ENCODE measurements at regions of chr11 and their contacts with region 1.

Region 1: DNA sequence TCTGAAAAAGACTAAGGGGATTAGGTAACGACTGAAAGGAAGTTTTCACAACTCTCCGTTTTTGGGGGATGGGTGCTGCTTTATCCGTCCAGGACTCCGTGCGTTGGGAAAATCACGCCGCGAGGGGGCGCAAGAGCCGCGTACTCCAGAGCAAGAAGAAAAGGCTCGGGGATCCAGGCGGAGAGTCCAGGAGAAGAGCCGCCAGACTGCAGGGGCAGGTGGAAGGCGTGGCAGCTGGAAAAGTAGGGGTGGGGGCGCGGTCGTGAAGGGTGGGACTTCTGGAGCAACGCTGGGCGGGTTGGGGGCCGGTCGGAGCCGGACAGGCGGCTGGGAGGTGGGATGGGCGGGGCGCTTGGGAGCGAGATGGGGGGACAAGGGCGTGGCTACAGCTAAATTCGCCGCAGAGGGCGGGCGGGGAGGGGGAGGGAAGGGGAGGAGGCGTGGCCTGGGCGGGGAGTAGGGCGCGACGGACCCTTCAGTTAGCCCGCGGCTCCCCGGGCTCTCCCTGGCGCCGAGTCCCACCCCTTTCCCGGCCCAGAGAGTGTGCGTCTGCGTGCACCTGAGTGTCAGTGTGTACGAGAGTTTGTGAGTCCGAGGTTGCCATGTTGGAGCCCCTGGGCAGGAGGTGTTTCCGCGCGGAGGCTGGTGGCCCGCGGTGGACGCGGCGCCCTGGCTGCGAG is 613 bp upstream of the ARHGEF17 start:
- DNase-seq: peak; percentile 95
- H3K4me3 Mint-ChIP-seq: peak overlapping the region; percentile 76
- H3K27ac Mint-ChIP-seq: no peak overlapping the region
- H3K4me1 Mint-ChIP-seq: peaks cover 6% of the 10 kb centered on the region
- H3K27me3 Mint-ChIP-seq: peaks cover 15% of the 10 kb centered on the region

Region 2: GRCh38 chr11:73239571-73240194 is 67.8 kb before region 1 on chr11:
- CTCF ChIA-PET with region 1: no interaction called
- intact Hi-C with region 1: no loop called
- DNase-seq: no peak
- H3K4me3 Mint-ChIP-seq: no peak overlapping the region
- H3K27ac Mint-ChIP-seq: no peak overlapping the region
- H3K4me1 Mint-ChIP-seq: no peaks in the 10 kb centered on the region
- H3K27me3 Mint-ChIP-seq: no peaks in the 10 kb centered on the region

Region 3: DNA sequence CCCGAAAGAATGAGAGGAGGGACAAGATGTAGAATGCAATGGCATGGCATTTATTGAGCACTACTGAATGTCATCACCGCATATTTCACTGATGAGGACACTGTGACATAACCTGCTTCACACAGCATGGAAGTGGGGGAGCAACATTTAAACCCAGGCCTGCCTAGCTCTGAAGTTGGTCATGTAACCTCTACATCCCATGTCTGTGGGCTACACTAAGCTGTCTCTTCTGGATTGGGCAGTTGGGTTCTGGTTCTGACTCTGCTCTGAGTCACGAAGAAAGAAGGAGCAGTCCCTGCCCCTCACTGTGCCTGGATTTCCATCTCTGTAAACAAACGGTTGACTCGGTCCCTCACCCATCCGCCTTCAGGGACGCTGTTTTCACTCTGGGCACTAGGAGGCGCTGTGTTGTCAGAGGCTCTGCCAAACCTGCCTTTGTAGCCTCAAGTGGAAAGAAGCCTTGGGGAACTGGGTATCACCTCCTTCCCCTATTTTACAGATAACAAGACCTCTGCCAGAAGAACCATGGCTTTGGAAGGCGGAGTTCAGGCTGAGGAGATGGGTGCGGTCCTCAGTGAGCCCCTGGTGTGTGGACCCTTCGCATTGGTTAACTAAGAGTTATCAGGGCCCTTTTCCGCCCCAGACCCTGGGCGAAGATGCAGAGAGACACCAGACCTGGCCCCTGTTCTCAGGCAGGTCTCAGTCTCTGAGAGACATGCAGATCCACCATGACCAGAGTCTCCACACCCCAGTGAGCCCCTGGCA is 12.1 kb before region 1 on chr11:
- CTCF ChIA-PET with region 1: interaction called, 22 read pairs
- intact Hi-C with region 1: no loop called
- DNase-seq: peak; percentile 90
- H3K4me3 Mint-ChIP-seq: no peak overlapping the region
- H3K27ac Mint-ChIP-seq: no peak overlapping the region
- H3K4me1 Mint-ChIP-seq: peaks cover 3% of the 10 kb centered on the region
- H3K27me3 Mint-ChIP-seq: peaks cover 4% of the 10 kb centered on the region

Region 4: DNA sequence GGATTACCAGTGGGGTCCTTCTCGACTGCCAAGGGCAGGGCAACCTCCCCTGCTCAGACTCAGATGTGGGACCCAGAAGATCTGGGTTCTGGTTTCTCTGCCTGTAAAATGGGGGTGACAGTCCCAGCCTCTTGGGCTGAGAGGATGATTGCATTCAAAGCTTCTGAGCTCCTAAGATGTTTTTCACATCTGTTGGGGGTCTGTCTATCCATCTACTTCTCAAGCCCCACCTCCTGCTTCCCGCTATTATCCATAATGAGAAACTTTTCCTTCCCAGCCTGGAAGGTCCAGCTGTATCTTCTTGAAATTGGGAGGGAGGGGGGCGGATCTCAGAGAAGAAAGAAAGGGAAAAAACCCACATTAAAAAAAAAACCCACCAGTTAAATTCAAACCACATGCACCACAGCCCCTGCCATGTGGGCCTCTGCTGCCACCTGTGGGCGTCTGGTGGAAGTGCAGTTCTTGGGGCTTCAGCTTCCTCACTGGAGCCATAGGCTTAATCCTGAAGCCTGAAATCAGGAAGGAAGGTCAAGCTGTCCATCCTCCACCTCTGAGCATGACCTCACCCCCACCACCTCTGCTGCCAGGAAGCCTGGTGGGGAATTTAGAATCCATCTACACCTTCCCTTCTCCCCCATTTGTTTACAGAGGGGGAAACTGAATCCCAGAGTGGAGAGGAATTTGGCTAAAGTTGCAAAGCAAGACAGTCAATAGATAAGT is 27.9 kb after region 1 on chr11:
- CTCF ChIA-PET with region 1: interaction called, 73 read pairs
- intact Hi-C with region 1: loop called (anchors 1 kb)
- DNase-seq: peak; percentile 87
- H3K4me3 Mint-ChIP-seq: no peak overlapping the region
- H3K27ac Mint-ChIP-seq: no peak overlapping the region
- H3K4me1 Mint-ChIP-seq: no peaks in the 10 kb centered on the region
- H3K27me3 Mint-ChIP-seq: no peaks in the 10 kb centered on the region

Region 5: DNA sequence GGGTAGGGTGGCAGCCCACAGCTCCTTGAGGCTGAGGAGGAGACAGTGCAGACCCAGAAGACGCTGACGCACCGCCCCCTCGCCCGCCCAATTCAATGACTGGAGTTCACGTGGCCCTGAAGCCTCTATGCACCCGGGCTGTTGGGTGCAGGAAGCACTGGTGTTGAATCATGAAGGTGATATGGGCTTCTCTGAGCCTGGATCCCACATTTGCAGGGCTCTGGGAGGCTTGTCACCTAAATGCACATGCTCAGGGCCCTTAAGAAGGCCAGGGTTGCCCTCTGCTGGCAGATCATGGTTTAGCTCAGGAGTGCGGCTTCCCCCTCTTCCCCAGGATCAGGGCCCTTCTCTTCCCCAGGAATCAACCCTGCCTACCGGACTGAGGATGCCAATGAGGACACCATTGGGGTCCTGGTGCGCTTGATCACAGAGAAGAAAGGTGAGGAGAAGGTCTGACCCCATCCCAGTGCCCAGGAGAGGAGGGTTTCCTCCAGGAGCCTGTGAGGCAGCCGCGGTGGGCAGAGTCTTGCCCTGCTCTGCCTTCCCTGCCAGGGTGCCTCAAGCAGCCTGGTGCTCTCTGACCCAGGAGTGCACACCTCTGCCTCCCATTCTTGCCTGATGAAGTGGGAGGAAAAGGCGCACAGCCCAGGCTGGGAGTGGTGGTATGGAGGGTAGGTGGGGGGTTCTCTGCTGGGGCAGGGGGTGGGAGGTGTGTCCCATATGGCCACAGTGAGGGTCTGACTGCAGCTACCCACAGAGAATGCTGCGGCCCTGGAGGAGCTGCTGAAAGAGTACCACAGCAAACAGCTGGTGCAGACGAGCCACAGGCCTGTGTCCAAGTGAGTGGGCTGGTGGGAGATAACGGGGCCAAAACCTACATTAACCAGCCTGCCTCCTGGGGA is 86.3 kb after region 1 on chr11:
- CTCF ChIA-PET with region 1: no interaction called
- intact Hi-C with region 1: loop called (anchors 2 kb)
- DNase-seq: peak; percentile 82
- H3K4me3 Mint-ChIP-seq: no peak overlapping the region
- H3K27ac Mint-ChIP-seq: no peak overlapping the region
- H3K4me1 Mint-ChIP-seq: no peaks in the 10 kb centered on the region
- H3K27me3 Mint-ChIP-seq: no peaks in the 10 kb centered on the region

Region 6: GRCh38 chr11:73661035-73661628 is 353.7 kb after region 1 on chr11:
- CTCF ChIA-PET with region 1: interaction called, 11 read pairs
- intact Hi-C with region 1: loop called (anchors 2 kb)
- DNase-seq: peak; percentile 93
- H3K4me3 Mint-ChIP-seq: peak overlapping the region; percentile 45
- H3K27ac Mint-ChIP-seq: no peak overlapping the region
- H3K4me1 Mint-ChIP-seq: peaks cover 6% of the 10 kb centered on the region
- H3K27me3 Mint-ChIP-seq: no peaks in the 10 kb centered on the region

Measured in activated naive CD4-positive, alpha-beta T cell treated with anti-CD3 and anti-CD28 coated beads for 36 hours (primary cell).